HEK293 (cell line): ENCODE measurements at regions of chr2 and their contacts with region 1.

Region 1: DNA sequence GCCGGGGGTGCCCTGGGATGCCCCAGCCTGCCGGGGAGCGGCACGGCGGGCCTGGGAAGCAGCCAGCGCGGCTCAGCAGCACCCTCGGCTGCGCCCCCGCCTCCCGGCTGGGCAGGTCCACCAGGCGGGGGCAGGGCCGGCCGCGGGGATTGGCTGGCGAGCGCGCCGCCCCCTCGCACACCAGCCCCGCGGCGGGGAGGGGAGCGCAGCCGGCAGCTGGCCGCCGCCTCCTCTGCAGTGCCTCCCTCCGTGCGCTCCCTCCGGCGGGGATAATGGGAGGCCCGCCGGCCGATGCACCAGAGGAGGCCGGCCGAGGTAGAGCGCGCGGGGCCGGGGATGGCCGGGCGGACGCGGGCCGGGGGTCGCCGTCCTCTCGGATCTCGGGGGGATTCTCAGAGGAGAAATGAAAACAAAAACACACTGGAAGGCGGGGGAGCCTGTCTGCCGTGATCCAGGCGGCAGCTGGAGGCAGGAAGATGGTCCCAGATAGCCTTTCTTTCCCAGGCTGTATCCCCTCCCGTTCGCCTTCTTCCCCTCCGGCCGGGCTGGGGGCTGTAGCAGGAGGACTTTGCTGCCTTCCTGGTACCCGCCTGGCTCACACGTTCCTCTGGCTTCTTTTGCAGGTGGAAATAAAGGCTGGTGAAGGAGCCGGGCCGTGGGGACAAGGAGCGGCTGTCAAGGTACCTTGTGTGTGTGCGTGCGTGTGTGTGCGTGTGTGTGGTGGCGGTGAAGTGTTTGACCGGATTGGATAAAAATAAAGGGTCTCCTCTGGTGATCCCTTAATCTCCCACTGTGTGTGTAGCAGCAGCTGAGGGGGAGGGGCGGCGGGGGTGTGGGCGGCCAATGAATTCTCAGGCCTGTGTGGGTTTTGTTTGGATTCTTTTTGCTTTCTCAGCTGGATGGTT is 18.0 kb downstream of the TET3 start:
- H3K4me3 ChIP-seq: peak overlapping the region; percentile 56
- H3K27ac ChIP-seq: peak overlapping the region; percentile 63; the same call in 1 of the 2 replicates
- H3K4me1 ChIP-seq: peaks cover 38% of the 10 kb centered on the region
- CTCF ChIP-seq: no peak

Region 2: DNA sequence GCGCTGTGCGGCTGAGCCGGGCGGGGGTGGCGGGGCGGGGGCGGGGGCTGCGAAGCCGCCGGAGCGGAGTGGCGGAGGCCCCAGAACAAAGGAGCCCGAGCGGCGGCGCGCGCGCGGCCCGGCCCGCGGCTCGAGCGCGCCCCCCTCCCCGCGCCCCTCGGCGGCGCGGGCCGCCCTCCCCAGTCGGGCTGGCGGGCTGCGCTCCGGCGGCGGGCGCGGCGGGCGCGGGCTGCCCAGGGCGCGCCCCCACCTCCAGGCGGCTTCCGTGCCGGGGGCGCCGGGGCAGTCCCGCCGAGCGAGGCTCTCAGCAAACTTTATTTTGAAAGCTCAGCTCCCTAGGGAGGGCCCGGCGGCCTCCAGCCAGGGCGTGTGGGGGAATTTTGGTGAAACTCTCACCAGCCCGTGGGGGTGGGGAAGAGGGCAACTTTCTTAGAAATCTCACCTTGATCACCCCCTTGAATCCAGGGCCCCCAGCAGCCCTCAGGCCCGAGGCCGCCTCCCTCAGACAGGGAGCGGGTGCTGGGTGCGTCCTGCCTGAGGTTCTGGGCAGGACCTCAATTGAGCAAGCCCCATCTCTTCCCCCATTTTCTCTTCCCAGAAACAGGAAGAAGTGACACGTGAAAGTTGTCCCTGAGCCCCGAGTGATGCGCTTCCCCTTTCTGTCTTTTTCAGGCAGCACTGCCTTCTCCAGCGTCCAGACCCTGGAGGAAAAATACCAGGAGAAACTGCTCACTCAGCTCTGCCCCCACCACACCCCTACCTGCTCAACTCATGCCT is 17.2 kb before region 1 on chr2:
- CTCF ChIA-PET with region 1: interaction called, 4 read pairs
- POLR2A ChIA-PET with region 1: interaction called, 10 read pairs
- H3K4me3 ChIP-seq: peak overlapping the region; percentile 51
- H3K27ac ChIP-seq: peak overlapping the region; percentile 65; the same call in 1 of the 2 replicates
- H3K4me1 ChIP-seq: peaks cover 15% of the 10 kb centered on the region
- CTCF ChIP-seq: no peak